Prostate gland (tissue), 2 donors: ENCODE measurements at regions of chr6 and their contacts with region 1.

Region 1: GRCh38 chr6:160028487-160029275 is 59.8 kb downstream of the IGF2R start:
- DNase-seq: no peak
- H3K4me3 ChIP-seq: no peak overlapping the region
- H3K27ac ChIP-seq: no peak overlapping the region
- H3K4me1 ChIP-seq: no peaks in the 10 kb centered on the region
- H3K27me3 ChIP-seq: no peaks in the 10 kb centered on the region
- CTCF ChIP-seq: no peak
- POLR2A ChIP-seq: no peak

Region 2: GRCh38 chr6:159969921-159970320 is 58.8 kb before region 1 on chr6:
- intact Hi-C with region 1: loop called (anchors 5 kb)
- DNase-seq: peak; percentile 57
- H3K4me3 ChIP-seq: peak overlapping the region; percentile 95 to 99
- H3K27ac ChIP-seq: peak overlapping the region; percentile 87 to 92
- H3K4me1 ChIP-seq: no peaks in the 10 kb centered on the region
- H3K27me3 ChIP-seq: no peaks in the 10 kb centered on the region
- CTCF ChIP-seq: no peak
- POLR2A ChIP-seq: peak; percentile 30

Region 3: GRCh38 chr6:160300076-160300695 is 271.5 kb after region 1 on chr6:
- intact Hi-C with region 1: no loop called
- DNase-seq: no peak
- H3K4me3 ChIP-seq: no peak overlapping the region
- H3K27ac ChIP-seq: no peak overlapping the region
- H3K4me1 ChIP-seq: no peaks in the 10 kb centered on the region
- H3K27me3 ChIP-seq: no peaks in the 10 kb centered on the region
- CTCF ChIP-seq: no peak
- POLR2A ChIP-seq: no peak

Region 4: DNA sequence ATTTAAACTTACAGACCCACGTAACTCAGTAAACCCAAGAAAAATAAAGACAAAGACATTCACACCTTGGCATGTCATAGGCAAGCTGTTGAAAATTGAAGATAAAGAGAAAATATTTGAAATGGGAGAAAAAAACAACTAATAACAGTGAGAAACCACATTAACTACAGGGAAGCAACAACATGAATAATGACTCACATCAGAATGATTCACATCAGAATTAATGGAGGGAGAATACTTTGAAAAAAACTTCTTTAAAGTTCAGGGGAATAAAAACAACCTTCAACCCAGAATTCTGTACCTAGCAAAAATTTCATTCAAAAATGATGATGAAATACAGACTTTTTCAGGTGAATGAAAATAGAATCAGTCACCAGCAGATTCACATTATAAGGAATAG is 286.6 kb after region 1 on chr6:
- intact Hi-C with region 1: no loop called
- DNase-seq: no peak
- H3K4me3 ChIP-seq: no peak overlapping the region
- H3K27ac ChIP-seq: no peak overlapping the region
- H3K4me1 ChIP-seq: no peaks in the 10 kb centered on the region
- H3K27me3 ChIP-seq: no peaks in the 10 kb centered on the region
- CTCF ChIP-seq: no peak
- POLR2A ChIP-seq: no peak